Keratinocyte (primary cell): ENCODE measurements at regions of chr22 and their contacts with region 1.

Region 1: DNA sequence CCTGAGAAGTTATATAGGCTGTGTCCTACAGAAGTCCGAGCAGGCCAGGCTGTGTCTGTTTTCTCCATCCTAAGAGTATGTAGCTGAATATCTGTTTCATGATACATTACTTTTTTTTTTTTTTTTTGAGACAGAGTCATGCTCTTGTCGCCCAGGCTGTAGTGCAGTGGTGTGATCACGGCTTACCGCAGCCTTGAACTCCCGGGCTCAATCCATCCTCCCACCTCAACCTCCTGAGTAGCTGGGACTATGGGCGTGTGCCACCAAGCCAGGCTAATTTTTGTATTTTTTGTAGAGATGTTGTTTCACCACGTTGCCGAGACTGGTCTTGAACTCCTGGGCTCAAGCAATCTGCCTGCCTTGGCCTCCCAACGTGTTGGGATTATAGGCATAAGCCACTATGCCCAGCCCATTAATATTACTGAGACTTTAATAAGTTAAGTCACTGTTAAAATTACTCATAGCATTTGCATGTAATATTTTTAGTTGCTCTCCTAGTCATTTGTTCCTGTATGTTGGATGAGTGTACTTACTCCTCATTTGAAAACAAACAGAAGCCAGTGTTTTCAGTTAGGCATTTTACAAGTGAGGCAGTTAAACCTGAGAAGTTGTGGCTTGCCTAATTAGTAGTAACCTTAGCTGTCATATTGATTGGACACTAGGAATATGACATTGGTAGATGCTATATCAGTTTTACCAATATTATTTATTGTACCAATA is 26.1 kb downstream of the DRG1 start:
- DNase-seq: no peak
- H3K4me3 ChIP-seq: no peak overlapping the region
- H3K27ac ChIP-seq: no peak overlapping the region
- H3K4me1 ChIP-seq: no peaks in the 10 kb centered on the region
- H3K27me3 ChIP-seq: no peaks in the 10 kb centered on the region
- CTCF ChIP-seq: no peak

Region 2: GRCh38 chr22:31465307-31465706 is 39.8 kb after region 1 on chr22:
- dilution Hi-C with region 1: loop called (anchors 5 kb)
- DNase-seq: no peak
- H3K4me3 ChIP-seq: no peak overlapping the region
- H3K27ac ChIP-seq: no peak overlapping the region
- H3K4me1 ChIP-seq: no peaks in the 10 kb centered on the region
- H3K27me3 ChIP-seq: no peaks in the 10 kb centered on the region
- CTCF ChIP-seq: no peak